Panc1 (cell line): ENCODE measurements at regions of chr19 and their contacts with region 1.

Region 1: GRCh38 chr19:5753743-5754142 is 30.8 kb downstream of the PRR22 start:
- DNase-seq: no peak
- ATAC-seq: no peak
- H3K4me3 ChIP-seq: no peak overlapping the region
- H3K27ac ChIP-seq: no peak overlapping the region
- H3K4me1 ChIP-seq: no peaks in the 10 kb centered on the region
- H3K27me3 ChIP-seq: no peaks in the 10 kb centered on the region
- CTCF ChIP-seq: no peak

Region 2: DNA sequence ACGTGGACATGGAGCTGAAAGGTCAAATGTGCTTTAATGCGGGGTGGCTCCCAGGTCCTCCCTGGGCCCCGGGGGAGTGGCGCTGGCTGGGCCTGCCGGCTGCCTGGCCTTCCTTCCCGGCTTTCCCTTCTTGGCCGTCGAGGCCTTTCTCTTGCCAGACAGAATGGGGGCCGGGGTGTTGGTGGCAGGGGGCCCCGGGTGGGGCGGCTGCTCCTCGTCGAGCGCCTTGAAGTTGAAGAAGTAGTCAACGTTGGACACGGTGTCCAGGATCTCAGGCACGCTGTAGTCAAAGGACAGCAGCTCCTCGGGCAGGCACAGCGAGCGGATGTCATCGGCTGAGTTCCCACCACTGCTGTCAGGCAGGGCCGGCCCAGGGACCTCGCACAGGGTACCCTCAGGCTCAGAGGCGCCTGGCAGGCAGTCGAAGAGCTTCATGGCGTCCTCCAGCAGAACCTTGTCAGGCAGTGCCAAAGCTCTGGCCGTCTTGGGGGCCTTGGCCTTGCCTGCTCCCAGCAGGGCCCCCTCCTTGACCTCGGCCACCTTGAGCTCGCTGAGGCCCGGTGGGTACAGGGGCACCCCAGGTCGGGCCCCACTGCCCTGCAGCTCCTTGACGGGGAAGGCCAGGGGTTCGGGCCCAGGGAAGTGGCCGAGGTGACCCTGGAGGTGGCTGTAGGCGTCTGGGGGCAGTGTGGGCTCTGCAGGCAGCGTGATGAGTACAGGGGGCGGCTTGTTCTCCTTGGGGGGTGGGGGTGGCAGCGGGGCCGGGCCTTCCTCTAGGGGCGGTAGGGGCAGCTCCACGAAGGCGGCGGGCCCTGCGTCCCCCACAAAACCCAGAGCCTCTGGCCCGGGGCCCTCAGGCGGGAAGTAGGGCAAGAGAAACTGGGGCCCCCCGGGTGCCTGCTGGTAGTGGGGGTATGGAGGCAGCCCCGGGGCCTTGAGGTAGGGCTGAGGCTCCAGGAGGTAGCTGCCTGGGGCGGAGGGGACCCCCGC is 29.5 kb after region 1 on chr19:
- CTCF ChIA-PET with region 1: no interaction called
- POLR2A ChIA-PET with region 1: no interaction called
- in situ Hi-C with region 1: no loop called
- intact Hi-C with region 1: no loop called
- DNase-seq: no peak
- ATAC-seq: 0 out of 2 replicates have a peak, but pooled peaks have one; percentile 36
- H3K4me3 ChIP-seq: no peak overlapping the region
- H3K27ac ChIP-seq: no peak overlapping the region
- H3K4me1 ChIP-seq: no peaks in the 10 kb centered on the region
- H3K27me3 ChIP-seq: no peaks in the 10 kb centered on the region
- CTCF ChIP-seq: no peak

Region 3: DNA sequence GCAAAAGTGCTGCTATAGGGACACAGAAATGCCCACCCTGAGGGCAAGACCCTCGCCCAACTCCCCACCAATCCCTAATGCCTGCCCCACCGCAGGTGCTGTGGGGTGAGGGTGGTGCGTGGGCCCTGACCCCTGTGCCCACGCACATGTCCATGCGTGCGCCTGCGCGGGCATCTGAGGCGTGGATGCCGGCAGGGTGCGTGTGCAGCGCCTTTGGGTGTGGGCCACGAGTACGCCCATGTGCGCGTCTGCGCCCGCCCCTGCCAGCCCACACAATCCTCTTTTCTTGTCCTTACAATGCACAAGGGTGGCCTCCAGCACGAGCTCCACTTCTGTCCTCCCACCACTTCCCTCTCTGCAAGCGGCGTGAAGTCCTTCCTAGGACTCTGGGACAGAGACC is 71.4 kb after region 1 on chr19:
- CTCF ChIA-PET with region 1: interaction called, 13 read pairs
- POLR2A ChIA-PET with region 1: no interaction called
- in situ Hi-C with region 1: no loop called
- intact Hi-C with region 1: no loop called
- DNase-seq: no peak
- ATAC-seq: no peak
- H3K4me3 ChIP-seq: no peak overlapping the region
- H3K27ac ChIP-seq: no peak overlapping the region
- H3K4me1 ChIP-seq: peaks cover 8% of the 10 kb centered on the region
- H3K27me3 ChIP-seq: no peaks in the 10 kb centered on the region
- CTCF ChIP-seq: no peak

Region 4: GRCh38 chr19:5839065-5840017 is 85.6 kb after region 1 on chr19 and contains the start of gene FUT6:
- CTCF ChIA-PET with region 1: no interaction called
- POLR2A ChIA-PET with region 1: no interaction called
- in situ Hi-C with region 1: no loop called
- intact Hi-C with region 1: no loop called
- DNase-seq: no peak
- ATAC-seq: no peak
- H3K4me3 ChIP-seq: no peak within 1 kb of the TSS
- H3K27ac ChIP-seq: no peak within 1 kb of the TSS
- H3K4me1 ChIP-seq: no peaks in the 10 kb centered on the region
- H3K27me3 ChIP-seq: no peaks in the 10 kb centered on the region
- CTCF ChIP-seq: no peak
- total RNA-seq, gene FUT6: not detected

Region 5: GRCh38 chr19:6540918-6541689 is 787.4 kb after region 1 on chr19:
- CTCF ChIA-PET with region 1: no interaction called
- POLR2A ChIA-PET with region 1: interaction called, 10 read pairs
- in situ Hi-C with region 1: no loop called
- intact Hi-C with region 1: no loop called
- DNase-seq: no peak
- ATAC-seq: no peak
- H3K4me3 ChIP-seq: no peak overlapping the region
- H3K27ac ChIP-seq: no peak overlapping the region
- H3K4me1 ChIP-seq: no peaks in the 10 kb centered on the region
- H3K27me3 ChIP-seq: no peaks in the 10 kb centered on the region
- CTCF ChIP-seq: no peak